B cell (primary cell): ENCODE measurements at regions of chr16 and their contacts with region 1.

Region 1: DNA sequence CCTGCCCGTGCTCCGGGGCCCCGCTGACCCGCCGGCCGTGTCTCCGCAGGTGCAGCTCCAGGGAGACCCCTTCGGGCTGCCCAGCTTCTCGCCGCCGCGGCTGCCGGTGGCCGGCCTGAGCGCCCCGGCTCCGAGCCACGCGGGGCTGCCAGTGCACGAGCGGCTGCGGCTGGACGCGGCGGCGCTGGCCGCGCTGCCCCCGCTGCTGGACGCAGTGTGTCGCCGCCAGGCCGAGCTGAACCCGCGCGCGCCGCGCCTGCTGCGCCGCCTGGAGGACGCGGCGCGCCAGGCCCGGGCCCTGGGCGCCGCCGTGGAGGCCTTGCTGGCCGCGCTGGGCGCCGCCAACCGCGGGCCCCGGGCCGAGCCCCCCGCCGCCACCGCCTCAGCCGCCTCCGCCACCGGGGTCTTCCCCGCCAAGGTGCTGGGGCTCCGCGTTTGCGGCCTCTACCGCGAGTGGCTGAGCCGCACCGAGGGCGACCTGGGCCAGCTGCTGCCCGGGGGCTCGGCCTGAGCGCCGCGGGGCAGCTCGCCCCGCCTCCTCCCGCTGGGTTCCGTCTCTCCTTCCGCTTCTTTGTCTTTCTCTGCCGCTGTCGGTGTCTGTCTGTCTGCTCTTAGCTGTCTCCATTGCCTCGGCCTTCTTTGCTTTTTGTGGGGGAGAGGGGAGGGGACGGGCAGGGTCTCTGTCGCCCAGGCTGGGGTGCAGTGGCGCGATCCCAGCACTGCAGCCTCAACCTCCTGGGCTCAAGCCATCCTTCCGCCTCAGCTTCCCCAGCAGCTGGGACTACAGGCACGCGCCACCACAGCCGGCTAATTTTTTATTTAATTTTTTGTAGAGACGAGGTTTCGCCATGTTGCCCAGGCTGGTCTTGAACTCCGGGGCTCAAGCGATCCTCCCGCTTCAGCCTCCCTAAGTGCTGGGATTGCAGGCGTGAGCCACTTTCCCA is 5.9 kb downstream of the CTF1 start:
- DNase-seq: peak; percentile 78
- ATAC-seq: peak; percentile 80
- H3K4me3 ChIP-seq: peak overlapping the region; percentile 45 to 82 (median 62)
- H3K4me3 Mint-ChIP-seq: peak overlapping the region; percentile 98
- H3K27ac ChIP-seq: peak overlapping the region; percentile 57 to 79
- H3K27ac Mint-ChIP-seq: peak overlapping the region; percentile 98
- H3K4me1 ChIP-seq: peaks cover 29 to 40% of the 10 kb centered on the region in 2 donors
- H3K4me1 Mint-ChIP-seq: peaks cover 25% of the 10 kb centered on the region
- H3K27me3 ChIP-seq: no peaks in the 10 kb centered on the region
- H3K27me3 Mint-ChIP-seq: no peaks in the 10 kb centered on the region
- CTCF ChIP-seq: no peak

Region 2: DNA sequence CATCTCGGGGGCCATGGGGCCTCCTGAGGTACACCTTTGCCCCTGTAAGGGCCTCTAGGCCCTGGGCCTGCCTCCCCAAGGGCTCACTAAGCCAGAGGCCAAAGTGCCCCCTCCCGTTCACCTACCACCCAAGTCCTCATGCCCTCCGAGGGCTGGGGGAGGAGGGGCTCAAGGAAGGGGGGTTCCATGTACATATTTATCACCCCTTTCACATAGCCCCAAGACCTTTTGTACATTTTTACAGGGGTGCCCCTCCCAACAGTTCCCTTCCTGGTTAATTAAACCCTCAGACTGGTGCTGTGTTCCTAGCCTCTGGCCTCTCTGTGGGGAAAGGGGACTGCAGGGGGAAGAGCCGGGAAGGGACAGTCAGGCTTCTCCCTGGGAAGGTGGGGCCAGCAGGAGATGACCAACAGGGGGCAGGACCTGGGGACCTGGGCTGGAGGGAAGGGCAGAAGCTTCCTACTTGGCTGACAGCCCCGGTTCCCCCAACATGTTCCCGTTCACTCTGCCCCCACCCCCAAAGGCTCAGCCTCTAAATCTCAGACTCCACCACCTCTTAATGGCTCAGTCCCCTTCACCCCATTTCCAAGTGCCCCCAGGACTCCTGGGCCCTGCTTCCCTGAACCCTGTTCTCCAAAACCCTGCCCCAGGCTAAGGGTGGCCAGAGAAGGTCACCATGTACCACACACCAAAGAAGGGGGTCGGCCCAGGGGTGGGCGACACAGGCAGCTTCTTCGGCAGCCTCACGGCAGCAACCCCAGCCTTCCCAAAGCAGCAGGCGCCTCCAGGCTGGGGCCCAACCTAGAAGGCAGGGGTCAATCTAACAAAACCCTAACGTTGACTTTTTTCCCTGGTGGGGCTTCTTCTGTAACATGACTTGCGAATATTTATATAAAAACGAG is 232.2 kb before region 1 on chr16:
- CTCF ChIA-PET with region 1: no interaction called
- POLR2A ChIA-PET with region 1: no interaction called
- intact Hi-C with region 1: no loop called
- DNase-seq: no peak
- ATAC-seq: no peak
- H3K4me3 ChIP-seq: no peak overlapping the region
- H3K4me3 Mint-ChIP-seq: no peak overlapping the region
- H3K27ac ChIP-seq: no peak overlapping the region
- H3K27ac Mint-ChIP-seq: no peak overlapping the region
- H3K4me1 ChIP-seq: no peaks in the 10 kb centered on the region
- H3K4me1 Mint-ChIP-seq: peaks cover 3% of the 10 kb centered on the region
- H3K27me3 ChIP-seq: no peaks in the 10 kb centered on the region
- H3K27me3 Mint-ChIP-seq: no peaks in the 10 kb centered on the region
- CTCF ChIP-seq: no peak

Region 3: DNA sequence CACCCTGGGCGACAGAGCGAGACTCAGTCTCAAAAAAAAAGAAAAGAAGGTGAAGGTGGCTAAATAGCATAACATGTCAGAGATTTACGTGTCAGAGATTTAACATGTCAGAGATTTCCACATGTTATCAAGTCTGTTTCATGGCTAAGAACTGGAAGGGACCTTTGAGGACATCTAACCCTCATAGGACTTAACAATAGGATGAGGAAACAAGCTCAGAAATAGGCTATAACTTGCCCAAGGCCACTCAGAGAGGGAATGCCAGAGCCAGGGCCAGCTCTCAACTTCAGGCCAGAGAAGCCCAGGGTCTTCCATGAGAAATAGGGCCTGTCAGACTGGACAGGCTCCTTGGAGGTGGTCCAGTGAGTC is 88.5 kb before region 1 on chr16:
- CTCF ChIA-PET with region 1: interaction called, 3 read pairs
- POLR2A ChIA-PET with region 1: no interaction called
- intact Hi-C with region 1: loop called (anchors 5 kb)
- DNase-seq: no peak
- ATAC-seq: no peak
- H3K4me3 ChIP-seq: peak overlapping the region; percentile 42 to 66 (median 57)
- H3K4me3 Mint-ChIP-seq: peak overlapping the region; percentile 88
- H3K27ac ChIP-seq: peak overlapping the region; percentile 65 to 69
- H3K27ac Mint-ChIP-seq: peak overlapping the region; percentile 85
- H3K4me1 ChIP-seq: peaks cover 9 to 15% of the 10 kb centered on the region in 2 donors
- H3K4me1 Mint-ChIP-seq: peaks cover 16% of the 10 kb centered on the region
- H3K27me3 ChIP-seq: no peaks in the 10 kb centered on the region
- H3K27me3 Mint-ChIP-seq: peaks cover 3% of the 10 kb centered on the region
- CTCF ChIP-seq: no peak

Region 4: DNA sequence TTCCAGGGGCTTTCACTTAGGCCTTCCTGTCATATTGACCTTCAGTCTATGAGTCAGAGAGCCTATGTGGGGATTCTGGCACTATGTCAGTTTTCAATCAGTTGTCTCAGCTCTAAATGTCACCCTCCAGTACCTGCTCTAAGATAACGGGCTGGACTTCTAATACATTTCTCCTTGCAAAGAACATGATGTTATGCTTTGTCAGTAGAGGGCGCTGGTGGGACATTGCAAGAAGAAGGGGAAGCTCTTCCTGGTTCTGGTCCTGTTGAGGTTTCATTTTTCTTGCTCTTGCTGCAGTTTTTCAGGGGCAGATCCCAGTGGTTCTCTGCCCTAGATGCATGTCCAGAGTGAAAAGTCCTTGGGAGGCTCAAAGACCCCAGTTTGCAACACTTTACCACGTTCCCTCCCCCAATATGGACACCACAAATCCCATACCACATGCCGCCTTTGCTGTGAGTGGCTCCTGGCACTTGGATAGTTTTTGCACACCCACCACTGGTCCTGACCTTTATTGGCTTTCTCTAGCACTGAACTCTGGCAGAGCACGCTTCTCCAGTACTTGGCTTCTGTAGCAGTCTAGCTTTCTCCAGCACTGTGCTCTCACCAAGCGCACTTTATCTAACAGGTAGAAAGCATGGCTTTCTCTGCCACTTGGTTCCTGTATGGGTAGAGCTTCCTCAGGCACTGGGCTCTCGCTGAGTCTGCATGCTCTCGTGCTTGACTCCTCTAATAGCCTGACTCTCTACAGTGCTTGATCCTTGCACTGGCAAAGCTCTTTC is 57.4 kb before region 1 on chr16:
- CTCF ChIA-PET with region 1: interaction called, 138 read pairs
- POLR2A ChIA-PET with region 1: interaction called, 13 read pairs
- intact Hi-C with region 1: loop called (anchors 1 kb)
- DNase-seq: peak; percentile 89
- ATAC-seq: peak; percentile 88
- H3K4me3 ChIP-seq: peak overlapping the region in 1 of 5 experiments; percentile 11
- H3K4me3 Mint-ChIP-seq: peak overlapping the region; percentile 76
- H3K27ac ChIP-seq: no peak overlapping the region
- H3K27ac Mint-ChIP-seq: peak overlapping the region; percentile 88
- H3K4me1 ChIP-seq: peaks cover 6 to 9% of the 10 kb centered on the region in 2 donors
- H3K4me1 Mint-ChIP-seq: peaks cover 9% of the 10 kb centered on the region
- H3K27me3 ChIP-seq: no peaks in the 10 kb centered on the region
- H3K27me3 Mint-ChIP-seq: peaks cover 3% of the 10 kb centered on the region
- CTCF ChIP-seq: peak; percentile 88

Region 5: DNA sequence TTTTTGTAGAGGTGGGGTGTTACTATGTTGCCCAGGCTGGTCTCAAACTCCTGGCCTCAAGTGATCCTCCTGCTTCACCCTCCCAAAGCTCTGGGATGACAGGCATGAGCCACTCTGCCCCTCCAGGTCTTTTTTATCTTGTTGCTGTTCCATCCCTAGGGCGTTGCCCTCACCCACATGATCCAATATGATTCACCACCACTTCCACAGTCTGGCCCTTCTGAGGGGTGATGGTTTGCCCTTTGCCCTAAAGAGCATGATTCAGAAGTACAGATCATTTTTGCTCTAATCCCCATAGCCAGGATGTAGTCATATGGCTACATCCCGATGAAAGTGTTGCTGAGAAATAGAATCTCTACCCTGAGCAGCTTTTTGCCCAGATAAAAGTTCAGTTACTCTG is 149.8 kb after region 1 on chr16:
- CTCF ChIA-PET with region 1: no interaction called
- POLR2A ChIA-PET with region 1: no interaction called
- intact Hi-C with region 1: no loop called
- DNase-seq: no peak
- ATAC-seq: no peak
- H3K4me3 ChIP-seq: no peak overlapping the region
- H3K4me3 Mint-ChIP-seq: no peak overlapping the region
- H3K27ac ChIP-seq: no peak overlapping the region
- H3K27ac Mint-ChIP-seq: no peak overlapping the region
- H3K4me1 ChIP-seq: peaks cover 0 to 5% of the 10 kb centered on the region in 2 donors
- H3K4me1 Mint-ChIP-seq: peaks cover 2% of the 10 kb centered on the region
- H3K27me3 ChIP-seq: no peaks in the 10 kb centered on the region
- H3K27me3 Mint-ChIP-seq: no peaks in the 10 kb centered on the region
- CTCF ChIP-seq: no peak